ENCODE measurements at regions of chr2 and their contacts with region 1.

Region 1: GRCh38 chr2:43426305-43427031 is 169.4 kb downstream of the THADA start:
- DNase-seq: peak; percentile 83 to 100
- H3K4me3 ChIP-seq: peak overlapping the region; percentile 0; the same call in 1 of the 2 replicates
- H3K27ac ChIP-seq: peak overlapping the region; percentile 100
- H3K4me1 ChIP-seq: peaks cover 78% of the 10 kb centered on the region
- H3K27me3 ChIP-seq: no peaks in the 10 kb centered on the region
- CTCF ChIP-seq: no peak

Region 2: DNA sequence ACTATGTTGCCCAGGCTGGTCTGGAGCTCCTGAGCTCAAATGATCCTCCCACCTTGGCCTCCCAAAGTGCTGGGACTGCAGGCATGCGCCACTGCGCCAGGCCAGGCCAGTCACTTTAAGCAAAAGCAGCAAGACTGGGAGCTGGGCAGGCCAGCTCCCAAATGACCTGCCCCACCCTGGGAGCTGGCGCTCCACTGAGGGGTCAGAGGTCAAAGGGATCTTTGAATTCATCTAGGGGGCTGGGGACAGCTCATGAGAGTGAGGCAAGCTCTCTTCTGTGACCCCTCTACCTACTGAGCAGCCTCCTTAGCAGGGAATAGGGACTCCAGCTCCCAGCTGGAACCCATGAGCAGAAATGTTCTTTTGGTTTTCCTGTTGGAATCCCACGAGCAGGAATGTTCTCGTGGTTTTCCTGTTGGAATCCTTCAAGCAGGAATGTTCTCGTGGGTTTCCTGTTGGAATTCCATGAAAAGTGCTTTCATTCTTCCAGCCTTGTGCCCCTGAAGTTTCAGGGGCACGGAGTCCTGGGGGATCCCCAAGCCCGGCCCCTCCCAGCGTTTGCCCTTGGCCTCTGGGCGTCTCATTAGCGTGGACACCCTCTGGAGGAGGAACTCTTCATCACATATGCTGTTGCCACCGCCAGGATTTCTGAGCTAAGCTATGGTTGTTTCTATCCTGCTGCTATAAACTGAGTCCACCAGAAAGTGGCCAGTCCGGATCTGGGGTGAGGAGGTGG is 472.1 kb before region 1 on chr2:
- CTCF ChIA-PET with region 1: no interaction called
- POLR2A ChIA-PET with region 1: interaction called, 13 read pairs
- intact Hi-C with region 1: no loop called
- DNase-seq: no peak
- H3K4me3 ChIP-seq: no peak overlapping the region
- H3K27ac ChIP-seq: no peak overlapping the region
- H3K4me1 ChIP-seq: peaks cover 59% of the 10 kb centered on the region
- H3K27me3 ChIP-seq: no peaks in the 10 kb centered on the region
- CTCF ChIP-seq: no peak

Region 3: GRCh38 chr2:43041661-43042360 is 384.7 kb before region 1 on chr2:
- CTCF ChIA-PET with region 1: no interaction called
- POLR2A ChIA-PET with region 1: no interaction called
- intact Hi-C with region 1: loop called (anchors 1 kb)
- DNase-seq: peak; percentile 93 to 95
- H3K4me3 ChIP-seq: peak overlapping the region; percentile 19; the same call in 1 of the 2 replicates
- H3K27ac ChIP-seq: peak overlapping the region; percentile 90
- H3K4me1 ChIP-seq: peaks cover 79% of the 10 kb centered on the region
- H3K27me3 ChIP-seq: no peaks in the 10 kb centered on the region
- CTCF ChIP-seq: no peak

Region 4: DNA sequence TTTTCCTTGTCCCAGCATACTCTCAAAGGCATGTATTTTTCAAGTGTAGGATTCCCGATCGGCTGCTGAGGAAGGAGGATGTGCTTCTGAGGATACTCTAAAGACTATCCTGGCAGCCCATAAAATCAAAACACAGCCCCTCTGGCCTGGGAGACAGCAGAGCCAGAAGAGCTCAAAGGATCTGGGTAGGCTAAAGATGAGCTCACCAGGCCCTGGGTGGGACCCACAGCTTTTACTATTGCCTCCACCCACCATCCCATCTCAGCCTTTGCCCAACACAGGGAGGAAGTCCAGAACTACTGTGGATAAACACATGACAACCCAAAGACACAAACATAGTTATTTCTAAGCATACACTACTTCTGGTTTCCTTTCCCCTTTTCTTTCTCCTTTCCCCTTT is 121.0 kb before region 1 on chr2:
- CTCF ChIA-PET with region 1: no interaction called
- POLR2A ChIA-PET with region 1: no interaction called
- intact Hi-C with region 1: loop called (anchors 1 kb)
- DNase-seq: no peak
- H3K4me3 ChIP-seq: no peak overlapping the region
- H3K27ac ChIP-seq: peak overlapping the region; percentile 63
- H3K4me1 ChIP-seq: peaks cover 38% of the 10 kb centered on the region
- H3K27me3 ChIP-seq: no peaks in the 10 kb centered on the region
- CTCF ChIP-seq: no peak

Region 5: DNA sequence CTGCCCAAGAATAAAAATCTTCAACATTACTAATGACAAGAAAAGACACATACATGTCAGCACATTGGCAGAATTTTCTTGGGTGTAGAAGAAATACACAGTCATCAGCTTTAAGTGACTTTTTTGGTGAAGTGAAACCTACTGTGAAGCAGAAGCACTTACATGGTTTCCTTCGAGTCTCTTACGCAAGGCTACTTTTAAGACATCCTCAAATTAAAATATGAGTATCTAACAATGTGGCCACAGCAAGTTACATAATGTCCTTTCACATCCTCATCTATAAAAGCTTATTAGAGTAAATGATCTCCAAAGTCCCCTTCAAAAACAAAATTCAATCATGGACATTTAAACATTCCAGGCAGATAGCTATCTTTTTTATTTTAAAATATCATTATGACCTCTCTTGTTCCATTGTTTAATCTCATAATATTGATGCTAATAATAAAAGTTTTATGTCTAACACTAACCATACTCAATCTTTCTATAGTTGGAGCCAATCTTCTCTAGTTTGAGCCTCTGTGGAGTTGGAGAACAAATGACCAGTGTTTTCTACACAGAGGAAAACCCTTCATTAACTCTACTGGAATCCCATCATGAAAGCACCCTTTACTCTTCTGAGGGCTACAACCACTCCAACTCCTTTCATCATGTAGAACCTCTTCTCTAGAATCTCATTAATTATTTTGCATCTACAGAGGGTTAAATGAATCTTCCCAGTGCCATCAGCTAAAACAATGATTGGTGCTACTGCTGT is 17.9 kb before region 1 on chr2:
- CTCF ChIA-PET with region 1: no interaction called
- POLR2A ChIA-PET with region 1: no interaction called
- intact Hi-C with region 1: no loop called
- DNase-seq: no peak
- H3K4me3 ChIP-seq: no peak overlapping the region
- H3K27ac ChIP-seq: no peak overlapping the region
- H3K4me1 ChIP-seq: peaks cover 13% of the 10 kb centered on the region
- H3K27me3 ChIP-seq: no peaks in the 10 kb centered on the region
- CTCF ChIP-seq: no peak

Region 6: GRCh38 chr2:43455731-43456642 is 29.5 kb after region 1 on chr2:
- CTCF ChIA-PET with region 1: interaction called, 4 read pairs
- POLR2A ChIA-PET with region 1: no interaction called
- intact Hi-C with region 1: loop called (anchors 1 kb)
- DNase-seq: peak; percentile 30 to 95
- H3K4me3 ChIP-seq: peak overlapping the region; percentile 25; the same call in 1 of the 2 replicates
- H3K27ac ChIP-seq: peak overlapping the region; percentile 78
- H3K4me1 ChIP-seq: peaks cover 80% of the 10 kb centered on the region
- H3K27me3 ChIP-seq: no peaks in the 10 kb centered on the region
- CTCF ChIP-seq: peak; percentile 37; the same call in 1 of the 2 replicates

Region 7: DNA sequence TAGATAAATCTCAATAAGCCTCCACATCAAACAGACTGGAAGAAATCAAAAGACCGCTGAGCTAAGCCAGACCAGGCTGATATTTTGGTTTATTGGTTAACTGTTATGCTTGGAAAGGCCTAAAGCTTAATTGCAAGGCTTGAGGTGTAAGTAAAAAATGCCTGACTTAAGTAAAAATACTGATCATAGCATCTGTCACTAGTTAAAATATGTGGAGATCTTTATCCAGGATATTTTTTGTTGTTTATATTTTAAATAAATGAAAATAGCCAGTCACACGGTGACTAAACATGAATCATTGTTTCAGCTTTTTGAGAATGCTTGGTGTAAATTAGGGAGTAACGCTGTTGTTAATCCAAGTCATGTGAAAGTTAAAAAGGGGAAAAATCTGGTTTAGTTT is 41.4 kb after region 1 on chr2:
- CTCF ChIA-PET with region 1: no interaction called
- POLR2A ChIA-PET with region 1: interaction called, 3 read pairs
- intact Hi-C with region 1: loop called (anchors 1 kb)
- DNase-seq: peak in 1 of 2 experiments; percentile 96
- H3K4me3 ChIP-seq: 0 out of 2 replicates have a peak overlapping the region, but pooled peaks have one; percentile 9
- H3K27ac ChIP-seq: peak overlapping the region; percentile 89
- H3K4me1 ChIP-seq: peaks cover 64% of the 10 kb centered on the region
- H3K27me3 ChIP-seq: no peaks in the 10 kb centered on the region
- CTCF ChIP-seq: no peak

Region 8: GRCh38 chr2:43519643-43520221 is 93.3 kb after region 1 on chr2:
- CTCF ChIA-PET with region 1: no interaction called
- POLR2A ChIA-PET with region 1: no interaction called
- intact Hi-C with region 1: loop called (anchors 1 kb)
- DNase-seq: peak; percentile 15 to 83
- H3K4me3 ChIP-seq: no peak overlapping the region
- H3K27ac ChIP-seq: peak overlapping the region; percentile 67
- H3K4me1 ChIP-seq: peaks cover 11% of the 10 kb centered on the region
- H3K27me3 ChIP-seq: no peaks in the 10 kb centered on the region
- CTCF ChIP-seq: no peak